Ovary (tissue), 10 donors: ENCODE measurements at regions of chr5 and their contacts with region 1.

Region 1: DNA sequence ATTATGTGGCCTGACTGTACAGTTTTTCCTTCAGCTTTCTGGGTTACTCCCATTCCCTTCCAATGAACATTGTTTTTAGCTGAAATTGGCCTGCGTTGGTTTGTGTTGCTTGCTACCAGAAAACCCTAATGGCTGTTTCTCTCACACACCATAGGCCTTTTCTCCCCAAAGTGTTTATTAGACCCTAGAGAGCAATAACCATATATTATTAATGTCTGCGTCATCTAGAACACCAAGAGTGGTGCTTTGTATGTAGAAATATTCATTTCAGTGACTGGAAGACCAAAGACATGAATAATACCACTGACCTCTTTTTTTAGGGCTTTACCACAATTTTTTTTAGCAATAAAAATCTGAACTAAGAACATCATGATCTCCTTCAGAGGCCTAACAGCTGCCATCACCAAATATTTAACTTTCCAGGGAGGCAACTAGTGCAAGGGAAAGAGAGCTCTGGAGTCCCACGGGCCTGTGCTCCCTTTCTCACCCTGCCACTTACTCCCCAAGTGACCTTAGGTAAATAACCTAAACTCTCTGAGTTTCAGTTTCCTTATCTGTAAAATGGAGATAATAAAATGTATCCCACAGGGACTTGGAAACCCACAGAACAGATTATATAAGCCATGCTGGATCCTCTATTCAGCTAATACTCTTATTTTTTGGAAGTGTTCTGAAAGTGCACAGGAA is 201.9 kb upstream of the ISL1 start:
- DNase-seq: no peak
- H3K4me3 ChIP-seq: no peak overlapping the region
- H3K27ac ChIP-seq: no peak overlapping the region
- H3K4me1 ChIP-seq: no peaks in the 10 kb centered on the region
- H3K27me3 ChIP-seq: no peaks in the 10 kb centered on the region
- CTCF ChIP-seq: no peak
- EP300 ChIP-seq: no peak
- POLR2A ChIP-seq: no peak

Region 2: GRCh38 chr5:51242453-51242852 is 61.1 kb after region 1 on chr5:
- intact Hi-C with region 1: loop called in 1 of 4 experiments (anchors 5 kb)
- DNase-seq: no peak
- H3K4me3 ChIP-seq: no peak overlapping the region
- H3K27ac ChIP-seq: no peak overlapping the region
- H3K4me1 ChIP-seq: no peaks in the 10 kb centered on the region
- H3K27me3 ChIP-seq: no peaks in the 10 kb centered on the region
- CTCF ChIP-seq: no peak
- EP300 ChIP-seq: no peak
- POLR2A ChIP-seq: no peak